Adrenal gland (tissue), 19 donors: ENCODE measurements at regions of chr3 and their contacts with region 1.

Region 1: DNA sequence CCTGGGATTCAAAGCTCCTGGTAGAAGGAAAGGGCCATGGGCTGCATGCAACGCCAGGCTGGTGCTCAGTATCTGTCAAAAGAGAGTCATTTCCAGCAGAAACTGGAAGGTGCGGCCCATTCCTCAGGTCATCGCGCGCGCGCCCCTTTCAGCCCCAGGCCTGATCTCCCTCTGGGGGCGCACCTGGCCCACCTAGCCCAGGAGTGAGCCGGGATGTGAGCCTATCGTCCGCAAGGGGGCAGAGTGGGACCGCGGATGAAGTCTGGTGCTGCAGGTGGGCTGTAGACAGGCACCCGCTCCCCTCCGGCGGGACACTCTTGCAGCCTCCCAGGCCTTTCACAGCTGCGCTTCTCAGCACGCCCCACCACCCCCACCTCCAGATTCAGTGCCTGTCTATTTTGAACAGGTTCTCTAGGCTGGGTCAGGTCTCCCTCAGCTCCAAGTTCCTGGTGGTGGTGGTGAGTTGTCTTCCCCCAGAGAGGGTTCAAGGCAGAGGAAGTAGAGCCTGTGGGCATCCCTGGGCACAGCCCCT is 5.8 kb upstream of the RPL29 start:
- DNase-seq: peak; percentile 59 to 88 (median 74)
- H3K4me3 ChIP-seq: no peak overlapping the region
- H3K27ac ChIP-seq: no peak overlapping the region
- H3K4me1 ChIP-seq: peaks cover 0 to 24% of the 10 kb centered on the region in 2 donors
- H3K27me3 ChIP-seq: no peaks in the 10 kb centered on the region
- CTCF ChIP-seq: peak; percentile 90 to 98 (median 95)
- POLR2A ChIP-seq: no peak

Region 2: DNA sequence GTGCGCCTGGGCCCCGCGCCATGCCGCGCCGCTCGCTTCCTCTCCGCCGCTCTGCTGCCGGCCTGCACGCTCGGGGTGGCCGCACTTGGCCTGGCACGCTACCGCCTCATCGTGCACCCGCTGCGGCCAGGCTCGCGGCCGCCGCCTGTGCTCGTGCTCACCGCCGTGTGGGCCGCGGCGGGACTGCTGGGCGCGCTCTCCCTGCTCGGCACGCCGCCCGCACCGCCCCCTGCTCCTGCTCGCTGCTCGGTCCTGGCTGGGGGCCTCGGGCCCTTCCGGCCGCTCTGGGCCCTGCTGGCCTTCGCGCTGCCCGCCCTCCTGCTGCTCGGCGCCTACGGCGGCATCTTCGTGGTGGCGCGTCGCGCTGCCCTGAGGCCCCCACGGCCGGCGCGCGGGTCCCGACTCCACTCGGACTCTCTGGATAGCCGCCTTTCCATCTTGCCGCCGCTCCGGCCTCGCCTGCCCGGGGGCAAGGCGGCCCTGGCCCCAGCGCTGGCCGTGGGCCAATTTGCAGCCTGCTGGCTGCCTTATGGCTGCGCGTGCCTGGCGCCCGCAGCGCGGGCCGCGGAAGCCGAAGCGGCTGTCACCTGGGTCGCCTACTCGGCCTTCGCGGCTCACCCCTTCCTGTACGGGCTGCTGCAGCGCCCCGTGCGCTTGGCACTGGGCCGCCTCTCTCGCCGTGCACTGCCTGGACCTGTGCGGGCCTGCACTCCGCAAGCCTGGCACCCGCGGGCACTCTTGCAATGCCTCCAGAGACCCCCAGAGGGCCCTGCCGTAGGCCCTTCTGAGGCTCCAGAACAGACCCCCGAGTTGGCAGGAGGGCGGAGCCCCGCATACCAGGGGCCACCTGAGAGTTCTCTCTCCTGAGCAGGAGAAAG is 45.4 kb before region 1 on chr3:
- intact Hi-C with region 1: no loop called
- DNase-seq: peak; percentile 55 to 80 (median 65)
- H3K4me3 ChIP-seq: peak overlapping the region in 1 of 4 donors; percentile 63
- H3K27ac ChIP-seq: peak overlapping the region in 4 of 5 donors; percentile 44 to 80 (median 72)
- H3K4me1 ChIP-seq: peaks cover 9 to 11% of the 10 kb centered on the region in 2 donors
- H3K27me3 ChIP-seq: no peaks in the 10 kb centered on the region
- CTCF ChIP-seq: peak; percentile 5 to 73 (median 34)
- POLR2A ChIP-seq: peak in 1 of 2 donors; percentile 15

Region 3: DNA sequence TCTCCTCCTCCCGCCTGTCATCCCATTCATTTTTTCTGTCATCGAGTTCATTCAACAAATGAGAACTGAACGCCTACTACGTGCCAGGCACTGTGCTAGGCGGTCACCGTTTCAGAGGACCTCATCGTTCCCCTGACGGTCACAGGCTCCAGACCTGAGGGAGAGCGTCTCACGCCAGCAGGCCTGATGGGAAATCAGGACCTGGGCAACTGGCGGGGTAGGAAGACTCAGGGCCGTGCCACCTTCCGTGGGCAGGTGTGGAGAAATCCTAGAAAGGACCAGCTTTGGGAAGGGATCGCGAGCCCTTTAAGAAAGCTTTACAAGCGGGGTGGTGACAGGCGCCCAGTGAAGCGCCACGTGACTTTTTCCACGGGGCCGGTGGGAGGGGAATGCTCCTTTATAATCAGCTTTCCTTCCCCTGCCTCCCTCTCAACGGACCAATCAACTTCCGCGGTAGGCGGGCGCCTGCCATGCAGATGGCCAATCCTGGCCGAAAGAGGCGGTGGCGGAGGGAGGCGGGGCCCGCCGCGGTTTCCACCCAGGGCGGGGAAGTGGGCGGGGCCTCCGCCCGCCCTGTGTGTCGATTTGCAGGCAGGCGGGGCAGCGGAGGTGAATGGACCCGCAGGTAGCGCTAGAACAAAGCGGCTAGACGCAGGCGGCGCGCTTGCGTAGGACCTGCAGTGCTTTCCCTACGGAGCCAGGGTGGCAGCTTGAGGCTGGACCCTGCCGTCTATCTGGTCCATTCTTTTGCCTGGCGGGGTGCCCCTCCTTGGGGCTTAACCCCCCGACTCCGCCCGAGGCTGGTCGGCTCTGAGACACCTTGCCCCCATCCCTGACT is 55.7 kb after region 1 on chr3:
- intact Hi-C with region 1: loop called (anchors 5 kb)
- DNase-seq: peak; percentile 99 to 100 (median 100)
- H3K4me3 ChIP-seq: peak overlapping the region in 3 of 4 donors; percentile 22 to 54 (median 36)
- H3K27ac ChIP-seq: peak overlapping the region; percentile 5 to 91 (median 71)
- H3K4me1 ChIP-seq: peaks cover 11 to 46% of the 10 kb centered on the region in 2 donors
- H3K27me3 ChIP-seq: no peaks in the 10 kb centered on the region
- CTCF ChIP-seq: no peak
- POLR2A ChIP-seq: peak in 1 of 2 donors; percentile 68

Region 4: GRCh38 chr3:52123106-52123725 is 121.7 kb after region 1 on chr3:
- intact Hi-C with region 1: loop called (anchors 2 to 5 kb)
- DNase-seq: peak; percentile 66 to 94 (median 79)
- H3K4me3 ChIP-seq: no peak overlapping the region
- H3K27ac ChIP-seq: peak overlapping the region in 2 of 5 donors; percentile 29 to 65
- H3K4me1 ChIP-seq: peaks cover 19 to 40% of the 10 kb centered on the region in 2 donors
- H3K27me3 ChIP-seq: no peaks in the 10 kb centered on the region
- CTCF ChIP-seq: peak; percentile 88 to 96 (median 92)
- POLR2A ChIP-seq: no peak

Region 5: DNA sequence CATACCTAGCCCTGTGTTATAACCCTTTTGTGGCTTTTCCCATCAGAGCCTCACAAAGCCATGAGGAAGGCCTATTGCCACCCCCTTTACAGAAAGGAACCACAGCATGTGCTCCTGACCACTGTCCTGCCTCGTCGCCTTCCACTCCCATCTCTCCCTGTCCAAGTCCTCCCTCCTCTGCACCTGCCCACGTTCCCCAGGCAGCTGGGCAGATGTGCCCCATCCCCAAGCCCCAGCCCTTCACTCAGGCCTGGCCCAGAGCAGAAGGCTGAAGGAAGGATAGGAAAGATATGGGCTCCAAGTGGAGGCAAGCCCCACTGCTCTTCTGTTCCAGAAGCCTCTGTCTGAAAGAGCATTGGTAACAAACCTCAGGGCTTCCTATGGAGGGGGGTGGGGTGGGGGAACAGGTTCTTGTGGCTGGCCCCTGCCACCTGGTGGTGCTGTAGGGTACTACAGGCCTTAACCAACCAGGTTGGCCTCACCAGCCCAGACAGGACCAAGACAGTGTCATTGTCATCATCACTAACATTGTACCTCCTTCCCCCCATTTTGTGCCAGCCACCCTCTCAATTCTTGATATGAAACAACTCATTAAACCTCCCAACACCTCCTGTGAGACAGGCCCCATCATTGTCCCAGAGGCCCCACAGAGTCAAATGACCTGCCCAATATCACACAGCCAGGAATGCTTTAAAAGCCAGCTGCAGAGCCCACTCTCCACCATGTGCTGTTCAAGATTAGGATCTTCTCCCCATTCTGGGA is 142.7 kb after region 1 on chr3:
- intact Hi-C with region 1: loop called (anchors 2 kb)
- DNase-seq: peak; percentile 86 to 97 (median 94)
- H3K4me3 ChIP-seq: no peak overlapping the region
- H3K27ac ChIP-seq: no peak overlapping the region
- H3K4me1 ChIP-seq: no peaks in the 10 kb centered on the region
- H3K27me3 ChIP-seq: no peaks in the 10 kb centered on the region
- CTCF ChIP-seq: peak; percentile 94 to 99 (median 98)
- POLR2A ChIP-seq: no peak